ENCODE measurements at regions of chr1 and their contacts with region 1.

Region 1: GRCh38 chr1:54488779-54489626 is 59.0 kb upstream of the ACOT11 start:
- DNase-seq: peak; percentile 85
- ATAC-seq: peak; percentile 85 to 90
- H3K4me3 ChIP-seq: peak overlapping the region; percentile 69
- H3K27ac ChIP-seq: peak overlapping the region; percentile 91
- H3K4me1 ChIP-seq: peaks cover 38% of the 10 kb centered on the region
- H3K27me3 ChIP-seq: peaks cover 5% of the 10 kb centered on the region
- CTCF ChIP-seq: peak; percentile 97

Region 2: GRCh38 chr1:54406339-54407153 is 82.5 kb before region 1 on chr1 and contains the start of gene SSBP3:
- intact Hi-C with region 1: loop called (anchors 5 kb)
- DNase-seq: peak; percentile 94
- ATAC-seq: peak; percentile 96
- H3K4me3 ChIP-seq: peak within 1 kb of the TSS; percentile 83
- H3K27ac ChIP-seq: peak within 1 kb of the TSS; percentile 84
- H3K4me1 ChIP-seq: peaks cover 55% of the 10 kb centered on the region
- H3K27me3 ChIP-seq: no peaks in the 10 kb centered on the region
- CTCF ChIP-seq: no peak
- total RNA-seq, gene SSBP3: 44.0 TPM